ENCODE measurements at regions of chr11 and their contacts with region 1.

Region 1: GRCh38 chr11:35126000-35126878 is 12.7 kb upstream of the CD44 start:
- DNase-seq: peak; percentile 49
- ATAC-seq: peak; percentile 71
- H3K4me3 Mint-ChIP-seq: peak overlapping the region; percentile 76
- H3K27ac Mint-ChIP-seq: peak overlapping the region; percentile 97
- H3K4me1 Mint-ChIP-seq: peaks cover 85% of the 10 kb centered on the region
- H3K27me3 Mint-ChIP-seq: no peaks in the 10 kb centered on the region
- CTCF ChIP-seq: no peak

Region 2: GRCh38 chr11:34594603-34595002 is 531.6 kb before region 1 on chr11:
- CTCF ChIA-PET with region 1: no interaction called
- POLR2A ChIA-PET with region 1: no interaction called
- intact Hi-C with region 1: no loop called
- DNase-seq: no peak
- ATAC-seq: no peak
- H3K4me3 Mint-ChIP-seq: no peak overlapping the region
- H3K27ac Mint-ChIP-seq: no peak overlapping the region
- H3K4me1 Mint-ChIP-seq: peaks cover 2% of the 10 kb centered on the region
- H3K27me3 Mint-ChIP-seq: peaks cover 17% of the 10 kb centered on the region
- CTCF ChIP-seq: no peak

Region 3: DNA sequence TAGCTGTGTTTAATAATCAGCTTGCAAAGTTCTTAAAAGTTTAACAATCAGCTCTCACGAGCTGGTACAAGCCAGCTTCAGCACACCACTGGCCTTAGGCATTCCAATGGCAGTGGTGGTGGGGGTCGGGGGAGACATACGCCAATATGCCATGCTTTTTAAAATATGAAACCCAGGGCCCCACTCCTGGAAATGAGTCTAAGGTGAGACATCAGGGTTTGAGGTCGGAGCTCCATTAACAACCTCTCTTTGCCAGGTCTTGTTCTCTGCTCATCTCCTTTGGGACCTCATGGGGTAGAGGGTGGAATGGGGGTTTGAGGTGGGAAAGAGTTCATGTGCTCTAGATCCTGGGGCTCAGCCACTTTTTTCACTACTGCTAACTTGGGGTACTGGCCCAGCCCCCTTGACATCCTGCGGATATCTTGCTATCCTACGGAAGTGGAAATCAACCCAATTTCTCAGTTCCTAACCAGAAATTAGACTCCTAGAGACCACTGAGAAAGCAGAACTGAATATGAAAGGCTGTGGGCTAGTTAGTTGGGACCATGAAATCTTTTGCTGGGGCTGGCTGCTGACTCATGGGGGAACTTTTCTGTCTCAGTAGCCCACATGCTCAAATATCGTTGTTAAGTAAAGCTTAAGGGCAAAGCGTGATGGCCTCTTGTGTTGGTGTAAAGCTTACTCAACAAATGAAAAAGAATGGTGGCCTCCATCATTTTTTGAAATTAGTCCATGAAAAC is 119.7 kb before region 1 on chr11:
- CTCF ChIA-PET with region 1: interaction called, 4 read pairs
- POLR2A ChIA-PET with region 1: interaction called, 15 read pairs
- intact Hi-C with region 1: loop called (anchors 2 kb)
- DNase-seq: peak; percentile 27
- ATAC-seq: peak; percentile 92
- H3K4me3 Mint-ChIP-seq: peak overlapping the region; percentile 28
- H3K27ac Mint-ChIP-seq: peak overlapping the region; percentile 84
- H3K4me1 Mint-ChIP-seq: peaks cover 58% of the 10 kb centered on the region
- H3K27me3 Mint-ChIP-seq: no peaks in the 10 kb centered on the region
- CTCF ChIP-seq: no peak

Region 4: DNA sequence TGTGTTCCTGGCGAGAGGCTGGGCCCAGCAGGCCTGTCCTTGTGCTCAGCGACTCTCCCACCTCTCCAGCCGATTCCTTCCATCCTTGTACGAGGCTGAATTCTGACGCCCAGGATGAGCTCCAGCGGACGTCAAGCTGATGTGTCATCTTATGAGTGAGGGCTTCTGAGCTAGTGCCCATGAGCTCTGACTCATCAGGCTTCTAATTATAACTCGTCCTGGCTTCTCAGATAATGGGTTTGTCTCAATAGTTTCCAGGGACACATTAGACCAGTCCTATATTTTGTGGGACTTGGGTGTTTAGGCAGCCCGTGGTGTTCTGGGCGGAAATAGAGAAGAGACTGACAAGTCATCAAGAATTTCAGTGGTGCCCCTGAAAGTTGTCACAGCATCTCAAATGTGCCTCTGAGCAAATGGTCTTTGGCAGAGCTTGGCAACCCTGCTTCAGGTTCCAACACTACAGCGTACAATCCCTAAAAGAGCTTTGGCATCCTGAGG is 95.5 kb before region 1 on chr11:
- CTCF ChIA-PET with region 1: interaction called, 3 read pairs
- POLR2A ChIA-PET with region 1: interaction called, 23 read pairs
- intact Hi-C with region 1: no loop called
- DNase-seq: no peak
- ATAC-seq: peak; percentile 58
- H3K4me3 Mint-ChIP-seq: peak overlapping the region; percentile 79
- H3K27ac Mint-ChIP-seq: peak overlapping the region; percentile 96
- H3K4me1 Mint-ChIP-seq: peaks cover 75% of the 10 kb centered on the region
- H3K27me3 Mint-ChIP-seq: no peaks in the 10 kb centered on the region
- CTCF ChIP-seq: no peak

Region 5: GRCh38 chr11:35106595-35106994 is 19.6 kb before region 1 on chr11:
- CTCF ChIA-PET with region 1: no interaction called
- POLR2A ChIA-PET with region 1: interaction called, 4 read pairs
- intact Hi-C with region 1: loop called (anchors 1 kb)
- DNase-seq: no peak
- ATAC-seq: peak; percentile 95
- H3K4me3 Mint-ChIP-seq: peak overlapping the region; percentile 72
- H3K27ac Mint-ChIP-seq: peak overlapping the region; percentile 83
- H3K4me1 Mint-ChIP-seq: peaks cover 71% of the 10 kb centered on the region
- H3K27me3 Mint-ChIP-seq: no peaks in the 10 kb centered on the region
- CTCF ChIP-seq: no peak

Region 6: GRCh38 chr11:35165423-35166368 is 39.5 kb after region 1 on chr11:
- CTCF ChIA-PET with region 1: no interaction called
- POLR2A ChIA-PET with region 1: interaction called, 3 read pairs
- intact Hi-C with region 1: loop called (anchors 1 kb)
- DNase-seq: peak; percentile 55
- ATAC-seq: peak; percentile 68
- H3K4me3 Mint-ChIP-seq: peak overlapping the region; percentile 76
- H3K27ac Mint-ChIP-seq: peak overlapping the region; percentile 91
- H3K4me1 Mint-ChIP-seq: peaks cover 100% of the 10 kb centered on the region
- H3K27me3 Mint-ChIP-seq: no peaks in the 10 kb centered on the region
- CTCF ChIP-seq: no peak

Measured in activated B cell treated with CpG ODN at 0.5 μM for 24 hours (primary cell).